Activated CD4-positive, alpha-beta T cell treated with anti-CD3 and anti-CD28 coated beads, Interleukin-2, amount 10 ng/mL, durations not matched to agents 24 days and 14 days (primary cell): ENCODE measurements at regions of chr19 and their contacts with region 1.

Region 1: DNA sequence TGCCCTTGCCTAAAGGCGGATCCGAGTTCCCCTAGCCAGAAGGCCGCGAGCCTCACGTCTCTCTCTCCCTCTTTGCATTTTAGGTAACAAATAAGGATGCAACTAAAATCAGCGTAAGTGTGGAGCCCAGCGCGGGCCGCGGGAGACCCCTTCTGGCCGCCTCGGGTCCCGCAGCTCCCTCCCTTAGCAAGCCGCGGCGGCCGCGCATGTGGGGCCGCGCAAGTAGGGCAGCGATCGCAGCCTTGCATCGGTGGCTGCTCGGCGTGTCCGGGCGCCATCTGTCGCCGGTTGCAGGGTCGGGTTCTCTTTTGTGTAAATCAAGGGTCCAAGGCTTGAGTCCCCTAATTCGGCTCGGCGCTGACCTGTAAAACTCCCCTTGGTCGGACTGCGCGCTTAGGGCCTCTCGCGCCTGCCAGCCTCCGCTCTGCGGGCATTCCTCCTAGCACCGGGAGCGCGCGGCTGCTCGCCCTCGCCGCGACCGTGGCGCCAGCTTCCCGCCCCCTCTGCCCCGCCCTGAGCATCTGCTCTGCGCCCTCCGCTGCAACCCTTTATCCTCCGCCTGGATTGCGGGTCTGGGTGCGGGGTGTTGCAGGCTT is 2.7 kb downstream of the VSTM2B start:
- DNase-seq: peak; percentile 89
- H3K4me3 Mint-ChIP-seq: peak overlapping the region; percentile 72
- H3K27ac Mint-ChIP-seq: peak overlapping the region; percentile 77
- H3K4me1 Mint-ChIP-seq: peaks cover 20% of the 10 kb centered on the region
- H3K27me3 Mint-ChIP-seq: peaks cover 67% of the 10 kb centered on the region

Region 2: DNA sequence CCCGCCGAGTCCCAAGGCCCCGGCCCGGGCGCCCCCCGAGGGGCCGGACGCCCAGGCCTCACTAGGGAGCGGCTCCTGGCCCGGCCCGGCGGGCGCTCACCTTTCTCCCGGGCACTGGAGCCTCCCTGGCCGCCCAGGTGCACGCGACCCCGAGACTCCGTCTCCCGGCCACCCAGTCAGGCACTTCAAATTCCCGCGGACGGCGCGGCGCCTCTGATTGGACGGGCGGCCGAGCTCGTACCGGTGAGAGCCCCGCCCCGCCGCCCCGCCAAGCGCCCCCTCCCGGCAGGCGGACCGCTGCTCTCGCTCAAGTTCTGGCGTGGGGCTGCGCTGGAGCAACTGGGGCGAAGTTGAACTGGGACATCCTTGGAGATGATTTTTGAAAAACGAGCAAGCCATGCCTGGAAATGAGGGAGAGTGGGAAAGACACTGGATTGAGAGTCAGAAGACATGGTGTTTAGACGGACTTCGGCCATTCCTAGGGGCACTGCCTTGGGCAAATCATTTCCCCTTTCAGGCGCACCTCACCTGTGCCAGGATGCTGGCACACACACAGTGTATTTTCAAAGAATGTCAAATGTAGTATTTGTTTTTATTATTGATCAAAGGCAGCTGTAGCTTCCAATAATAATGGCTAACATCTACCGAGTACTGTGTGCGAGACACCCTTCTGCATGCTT is 800.8 kb before region 1 on chr19:
- intact Hi-C with region 1: loop called (anchors 5 kb)
- DNase-seq: peak; percentile 91
- H3K4me3 Mint-ChIP-seq: peak overlapping the region; percentile 64
- H3K27ac Mint-ChIP-seq: no peak overlapping the region
- H3K4me1 Mint-ChIP-seq: no peaks in the 10 kb centered on the region
- H3K27me3 Mint-ChIP-seq: peaks cover 22% of the 10 kb centered on the region

Region 3: DNA sequence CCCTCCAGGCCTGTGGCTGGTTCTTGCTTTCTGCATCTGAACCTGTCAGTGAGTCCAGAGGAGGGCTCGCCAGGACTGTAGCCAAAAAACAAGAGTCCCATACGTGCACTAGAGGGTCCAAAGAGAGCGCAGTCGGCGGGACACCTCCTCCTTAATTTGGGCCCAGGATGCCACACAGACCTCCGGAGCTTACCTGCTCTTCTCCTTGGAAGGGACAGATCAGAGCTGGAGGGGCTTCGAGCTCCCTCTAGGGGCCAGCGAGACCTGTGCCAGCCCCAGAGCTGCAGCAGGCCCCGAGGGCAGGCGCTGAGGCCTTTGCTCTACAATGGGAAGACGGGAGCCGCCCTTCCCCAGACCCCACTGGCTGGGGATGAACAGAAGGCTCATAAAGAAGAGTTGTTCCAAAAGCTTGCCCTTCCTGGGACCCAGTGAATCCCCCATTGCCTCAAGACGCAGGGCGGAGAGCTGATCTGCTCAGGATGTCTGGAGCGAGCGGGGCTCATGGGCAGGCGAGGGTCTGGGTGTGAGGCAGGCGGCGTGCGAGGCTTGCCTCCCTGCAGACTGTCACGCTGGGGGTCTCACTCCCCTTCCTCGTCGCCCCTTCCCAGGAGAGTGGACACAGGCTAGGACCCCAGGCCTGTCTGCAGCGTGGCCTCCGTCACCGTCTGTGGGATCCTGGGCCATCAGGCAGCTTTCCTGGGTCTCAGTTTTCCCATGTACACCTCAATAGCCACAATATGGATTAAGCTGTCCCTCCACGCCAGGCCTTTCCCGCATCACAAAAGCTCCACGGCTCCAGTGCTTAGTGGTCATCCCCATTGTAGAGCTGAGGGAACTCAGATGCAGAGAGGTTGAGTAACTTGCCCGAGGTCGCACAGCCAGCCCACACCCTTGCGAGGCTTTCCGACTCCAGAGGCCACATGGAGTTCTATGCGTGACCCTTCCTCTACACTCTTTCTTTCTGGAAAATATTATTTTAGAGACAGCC is 49.6 kb before region 1 on chr19:
- intact Hi-C with region 1: loop called (anchors 10 kb)
- DNase-seq: peak; percentile 57
- H3K4me3 Mint-ChIP-seq: no peak overlapping the region
- H3K27ac Mint-ChIP-seq: no peak overlapping the region
- H3K4me1 Mint-ChIP-seq: no peaks in the 10 kb centered on the region
- H3K27me3 Mint-ChIP-seq: peaks cover 3% of the 10 kb centered on the region

Region 4: DNA sequence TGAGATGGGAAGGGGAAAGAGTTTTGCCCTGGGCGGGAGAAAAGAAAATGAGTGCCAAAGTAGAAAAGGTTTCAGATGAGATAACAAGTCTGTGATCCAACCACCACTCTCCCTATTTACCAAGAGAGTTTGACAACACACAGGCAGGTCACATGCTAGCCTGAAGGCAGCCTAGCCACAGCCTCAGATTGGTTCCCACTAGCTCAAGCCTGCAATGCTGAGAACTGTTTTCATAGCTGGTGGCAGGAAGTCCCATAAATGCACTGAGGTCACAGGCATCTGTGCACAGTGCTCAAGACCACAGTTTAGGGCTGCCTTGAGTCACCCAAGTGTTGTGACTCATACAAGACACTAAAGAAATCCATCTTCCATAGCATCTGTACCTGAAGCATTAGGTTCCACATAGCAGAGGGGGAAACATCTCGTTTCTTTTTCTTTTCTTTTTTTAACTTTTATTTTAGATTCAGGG is 59.1 kb after region 1 on chr19:
- intact Hi-C with region 1: loop called (anchors 5 kb)
- DNase-seq: peak; percentile 93
- H3K4me3 Mint-ChIP-seq: peak overlapping the region; percentile 39
- H3K27ac Mint-ChIP-seq: peak overlapping the region; percentile 78
- H3K4me1 Mint-ChIP-seq: peaks cover 29% of the 10 kb centered on the region
- H3K27me3 Mint-ChIP-seq: peaks cover 21% of the 10 kb centered on the region

Region 5: GRCh38 chr19:29662604-29663404 is 134.4 kb after region 1 on chr19:
- intact Hi-C with region 1: no loop called
- DNase-seq: peak; percentile 64
- H3K4me3 Mint-ChIP-seq: peak overlapping the region; percentile 64
- H3K27ac Mint-ChIP-seq: peak overlapping the region; percentile 90
- H3K4me1 Mint-ChIP-seq: peaks cover 39% of the 10 kb centered on the region
- H3K27me3 Mint-ChIP-seq: no peaks in the 10 kb centered on the region

Region 6: GRCh38 chr19:30227661-30228428 is 699.4 kb after region 1 on chr19:
- intact Hi-C with region 1: loop called (anchors 2 kb)
- DNase-seq: peak; percentile 89
- H3K4me3 Mint-ChIP-seq: peak overlapping the region; percentile 89
- H3K27ac Mint-ChIP-seq: no peak overlapping the region
- H3K4me1 Mint-ChIP-seq: peaks cover 21% of the 10 kb centered on the region
- H3K27me3 Mint-ChIP-seq: peaks cover 70% of the 10 kb centered on the region